ENCODE measurements at regions of chr1 and their contacts with region 1.

Region 1: GRCh38 chr1:228464487-228464983 is 22.6 kb upstream of the RNF187 start:
- DNase-seq: peak; percentile 96
- H3K4me3 Mint-ChIP-seq: peak overlapping the region; percentile 91
- H3K27ac Mint-ChIP-seq: peak overlapping the region; percentile 94
- H3K4me1 Mint-ChIP-seq: peaks cover 37% of the 10 kb centered on the region
- H3K27me3 Mint-ChIP-seq: peaks cover 19% of the 10 kb centered on the region

Region 2: GRCh38 chr1:228180271-228180958 is 284.1 kb before region 1 on chr1:
- CTCF ChIA-PET with region 1: no interaction called
- intact Hi-C with region 1: no loop called
- DNase-seq: no peak
- H3K4me3 Mint-ChIP-seq: no peak overlapping the region
- H3K27ac Mint-ChIP-seq: no peak overlapping the region
- H3K4me1 Mint-ChIP-seq: no peaks in the 10 kb centered on the region
- H3K27me3 Mint-ChIP-seq: no peaks in the 10 kb centered on the region

Region 3: GRCh38 chr1:228212966-228213844 is 251.3 kb before region 1 on chr1:
- CTCF ChIA-PET with region 1: interaction called, 3 read pairs
- intact Hi-C with region 1: loop called (anchors 2 kb)
- DNase-seq: peak; percentile 92
- H3K4me3 Mint-ChIP-seq: peak overlapping the region; percentile 83
- H3K27ac Mint-ChIP-seq: peak overlapping the region; percentile 50
- H3K4me1 Mint-ChIP-seq: no peaks in the 10 kb centered on the region
- H3K27me3 Mint-ChIP-seq: no peaks in the 10 kb centered on the region

Region 4: DNA sequence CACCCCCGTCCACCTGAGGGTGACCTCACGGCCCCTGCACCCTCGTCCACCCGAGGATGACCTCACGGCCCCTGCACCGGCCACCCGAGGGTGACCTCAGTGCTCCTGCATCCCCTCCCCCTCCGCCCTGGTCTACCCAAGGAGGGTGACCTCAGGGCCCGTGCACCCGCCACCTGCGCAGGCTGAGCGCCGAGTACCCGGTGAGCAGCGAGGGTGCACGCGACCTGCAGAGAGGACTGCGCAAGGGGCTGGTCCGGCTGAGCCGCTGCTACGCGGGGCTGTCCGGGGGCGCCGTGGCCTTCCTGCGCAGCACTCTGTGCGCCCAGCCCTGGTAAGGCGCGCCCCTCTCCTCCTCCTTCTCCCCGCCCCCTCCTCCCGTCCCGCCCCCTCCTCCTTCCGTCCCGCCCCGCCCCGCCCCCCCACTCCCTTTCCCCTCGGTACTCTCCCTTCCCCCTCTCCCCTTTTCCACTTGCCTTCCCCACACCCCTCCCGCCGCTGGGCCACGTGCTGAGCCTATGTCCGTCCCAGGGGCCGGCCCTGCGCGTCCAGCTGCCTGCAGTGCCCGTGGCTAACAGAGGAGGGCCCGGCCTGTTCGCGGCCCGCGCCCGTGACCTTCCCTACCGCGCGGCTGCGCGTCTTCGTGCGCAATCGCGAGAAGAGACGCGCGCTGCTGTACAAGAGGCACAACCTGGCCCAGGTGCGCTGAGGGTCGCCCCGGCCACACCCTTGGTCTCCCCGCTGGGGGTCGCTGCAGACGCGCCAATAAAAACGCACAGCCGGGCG is 86.3 kb before region 1 on chr1:
- CTCF ChIA-PET with region 1: no interaction called
- intact Hi-C with region 1: loop called (anchors 2 kb)
- DNase-seq: peak; percentile 80
- H3K4me3 Mint-ChIP-seq: peak overlapping the region; percentile 74
- H3K27ac Mint-ChIP-seq: no peak overlapping the region
- H3K4me1 Mint-ChIP-seq: peaks cover 11% of the 10 kb centered on the region
- H3K27me3 Mint-ChIP-seq: peaks cover 14% of the 10 kb centered on the region

Region 5: DNA sequence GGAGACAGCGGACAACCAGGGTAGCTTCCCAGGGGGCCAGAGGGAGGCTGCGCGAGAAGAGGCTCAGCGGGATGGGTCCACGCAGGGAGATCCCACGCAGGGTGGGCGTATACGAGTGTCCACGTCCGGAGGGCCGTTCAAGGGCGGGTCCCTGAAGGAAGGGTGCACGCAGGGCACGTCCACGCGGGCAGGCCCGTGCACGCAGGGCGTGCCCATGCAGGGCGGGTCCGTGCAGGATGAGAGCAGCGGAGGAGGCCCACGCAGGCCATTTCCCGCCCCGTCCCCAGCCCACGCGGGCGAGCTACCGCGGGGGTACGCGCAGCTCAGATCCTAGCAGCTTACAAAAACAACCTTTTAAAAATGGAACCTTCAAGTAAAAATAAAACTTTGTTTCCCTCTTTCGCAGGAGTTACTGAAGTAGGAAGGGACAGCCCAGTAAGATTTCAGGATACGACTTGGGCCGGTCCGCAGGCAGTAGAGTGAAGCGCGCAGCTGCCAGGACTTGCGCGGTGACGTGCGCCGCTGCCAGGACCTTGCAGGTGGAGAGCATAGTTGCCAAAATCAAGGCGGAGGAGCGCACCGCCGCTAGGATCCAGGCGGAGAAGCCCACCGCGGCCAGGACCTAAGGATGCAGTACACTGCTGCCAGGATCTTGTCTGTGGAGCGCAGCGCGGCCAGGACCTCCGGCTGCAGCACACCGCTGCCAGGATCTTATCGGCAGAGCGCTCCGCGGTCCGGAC is 22.2 kb after region 1 on chr1:
- CTCF ChIA-PET with region 1: interaction called, 5 read pairs
- intact Hi-C with region 1: loop called (anchors 1 kb)
- DNase-seq: peak; percentile 76
- H3K4me3 Mint-ChIP-seq: peak overlapping the region; percentile 95
- H3K27ac Mint-ChIP-seq: peak overlapping the region; percentile 97
- H3K4me1 Mint-ChIP-seq: peaks cover 31% of the 10 kb centered on the region
- H3K27me3 Mint-ChIP-seq: no peaks in the 10 kb centered on the region

Measured in activated naive CD4-positive, alpha-beta T cell treated with anti-CD3 and anti-CD28 coated beads for 36 hours (primary cell).